Aorta (tissue), 5 donors: ENCODE measurements at regions of chr15 and their contacts with region 1.

Region 1: GRCh38 chr15:25971053-25971452 is 107.9 kb upstream of the ATP10A start:
- DNase-seq: no peak
- ATAC-seq: peak; percentile 46
- H3K4me3 ChIP-seq: no peak overlapping the region
- H3K27ac ChIP-seq: no peak overlapping the region
- H3K4me1 ChIP-seq: peaks cover 0 to 2% of the 10 kb centered on the region in 2 donors
- H3K27me3 ChIP-seq: no peaks in the 10 kb centered on the region

Region 2: DNA sequence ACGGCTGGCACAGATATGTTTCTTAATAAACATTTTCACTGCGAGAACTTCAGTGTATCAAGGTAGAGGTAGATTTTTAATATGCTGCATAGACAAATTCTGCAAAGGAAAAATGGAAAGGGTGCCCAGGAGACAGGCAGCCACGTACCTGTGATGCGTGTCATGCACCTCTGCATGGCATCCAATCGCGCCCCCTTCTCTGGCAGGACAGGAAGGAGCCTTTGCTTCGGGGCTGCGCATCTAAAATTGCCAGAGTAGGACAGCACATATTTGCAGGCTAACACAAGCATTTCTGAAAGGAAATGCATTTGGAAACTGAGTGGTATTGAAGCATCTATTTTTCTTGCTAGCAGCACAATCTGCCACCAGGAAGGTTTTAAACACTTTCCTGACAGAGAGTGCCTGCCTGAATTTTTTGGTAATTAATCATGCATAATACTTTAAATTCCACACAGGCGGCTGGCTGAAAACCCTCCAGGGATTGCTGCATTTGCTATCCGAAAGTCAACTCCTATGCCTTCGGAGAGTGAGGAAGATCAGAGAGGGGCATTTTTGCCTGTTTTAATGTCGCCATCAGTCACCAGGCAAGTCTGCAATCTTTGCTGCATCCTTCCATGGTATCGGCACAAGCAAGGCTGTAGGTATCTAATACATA is 57.2 kb after region 1 on chr15:
- intact Hi-C with region 1: loop called in 1 of 2 experiments (anchors 10 kb)
- DNase-seq: no peak
- ATAC-seq: no peak
- H3K4me3 ChIP-seq: no peak overlapping the region
- H3K27ac ChIP-seq: no peak overlapping the region
- H3K4me1 ChIP-seq: no peaks in the 10 kb centered on the region
- H3K27me3 ChIP-seq: no peaks in the 10 kb centered on the region

Region 3: DNA sequence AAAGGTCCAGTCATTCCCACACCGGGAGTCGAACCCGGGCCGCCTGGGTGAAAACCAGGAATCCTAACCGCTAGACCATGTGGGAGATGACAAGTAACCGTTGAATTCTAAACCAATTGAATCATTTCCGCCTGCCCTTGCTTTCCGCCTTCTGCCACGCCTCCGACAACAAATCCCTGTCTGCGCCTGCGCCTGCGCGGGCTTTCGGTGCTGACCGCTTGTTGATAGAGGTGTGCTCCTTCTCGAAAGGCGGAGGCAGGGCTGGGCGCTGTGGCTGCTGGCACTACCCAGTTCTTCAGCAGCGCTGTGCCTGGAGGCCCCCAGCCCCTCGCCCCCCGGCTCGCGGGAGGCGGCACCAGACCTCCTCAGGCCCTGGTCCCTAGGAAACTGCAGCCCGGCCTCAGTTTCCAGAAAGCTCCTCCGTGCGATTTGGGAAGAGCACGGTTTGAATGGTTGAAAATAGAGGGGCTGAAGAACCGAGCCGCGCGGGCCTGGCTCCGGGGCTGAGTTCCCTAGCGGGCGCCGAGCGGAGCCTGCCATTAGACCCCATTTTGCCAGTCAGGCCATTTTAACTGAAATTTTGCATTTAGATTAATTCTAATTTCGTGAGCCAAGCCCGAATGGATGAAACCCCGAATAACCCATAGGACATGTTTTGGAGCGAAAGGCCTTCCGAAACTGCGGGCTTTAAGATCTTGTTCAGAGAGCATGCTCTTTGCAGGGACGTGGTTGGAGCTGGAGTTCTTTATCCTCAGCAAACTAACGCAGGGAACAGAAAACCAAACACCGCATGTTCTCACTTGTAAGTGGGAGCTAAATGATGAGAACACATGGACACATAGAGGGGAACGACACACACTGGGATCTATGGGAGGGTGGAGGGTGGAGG is 111.4 kb after region 1 on chr15:
- intact Hi-C with region 1: loop called in 1 of 2 experiments (anchors 5 kb)
- DNase-seq: peak; percentile 97 to 99
- ATAC-seq: peak; percentile 99
- H3K4me3 ChIP-seq: peak overlapping the region; percentile 88 to 94
- H3K27ac ChIP-seq: peak overlapping the region; percentile 84 to 91
- H3K4me1 ChIP-seq: no peaks in the 10 kb centered on the region
- H3K27me3 ChIP-seq: no peaks in the 10 kb centered on the region

Region 4: GRCh38 chr15:26340376-26340775 is 369.3 kb after region 1 on chr15:
- intact Hi-C with region 1: no loop called
- DNase-seq: no peak
- ATAC-seq: no peak
- H3K4me3 ChIP-seq: no peak overlapping the region
- H3K27ac ChIP-seq: no peak overlapping the region
- H3K4me1 ChIP-seq: no peaks in the 10 kb centered on the region
- H3K27me3 ChIP-seq: no peaks in the 10 kb centered on the region